Activated T-helper 1 cell treated with anti-CD3 and anti-CD28 coated beads, Interleukin-12 subunit alpha, Interleukin-12 subunit beta, Interleukin-2, Interleukin-4 antibody, amounts not matched to agents 30 ng/mL and 10 ng/mL and 1 ng/mL, durations not matched to agents 14 hours and 24 hours and 36 hours (primary cell): ENCODE measurements at regions of chr12 and their contacts with region 1.

Region 1: DNA sequence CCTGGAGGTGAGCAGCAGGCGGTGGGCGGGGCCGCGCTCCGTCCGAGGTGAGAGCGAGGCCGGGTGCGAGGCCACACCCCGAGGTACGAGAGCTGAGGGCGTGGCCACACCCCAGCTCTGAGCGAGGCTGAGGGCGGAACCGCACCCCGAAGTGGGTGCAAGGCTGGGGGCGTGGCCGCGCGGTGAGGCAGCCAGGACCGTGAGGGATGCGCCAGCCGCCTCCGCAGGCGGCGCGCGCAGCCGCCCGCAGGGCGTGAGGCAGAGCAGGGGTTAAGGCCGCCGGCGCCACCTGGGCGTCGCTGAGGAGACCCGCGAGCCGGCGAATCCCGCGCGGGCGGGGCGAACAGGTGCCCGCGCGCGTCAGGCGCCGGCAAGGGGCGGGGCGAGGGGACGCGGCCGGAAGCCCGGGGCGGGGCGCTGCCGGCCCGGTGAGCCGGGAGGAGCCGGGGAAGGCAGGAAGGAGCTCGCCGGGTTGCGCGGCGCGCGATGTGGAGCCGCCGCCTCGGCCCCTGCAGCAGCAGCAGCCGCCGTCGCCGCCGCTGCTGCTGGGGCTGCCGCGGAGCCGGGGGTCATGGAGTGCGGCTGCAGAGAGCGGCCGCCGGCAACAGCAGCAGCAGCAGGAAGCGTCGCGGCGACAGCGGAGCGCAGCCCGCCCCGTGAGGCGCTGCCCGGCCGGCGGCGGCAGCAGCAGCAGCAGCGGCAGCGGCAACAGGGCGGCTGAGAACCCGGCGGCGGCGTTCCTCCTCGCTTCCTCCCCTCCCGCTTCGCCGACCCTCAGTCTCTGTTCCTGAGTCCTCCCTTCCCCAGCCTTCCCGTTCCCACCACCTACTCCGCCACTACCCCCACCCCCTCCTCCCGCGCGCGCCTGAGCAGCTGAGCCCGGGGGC is at the start of gene BICDL1:
- DNase-seq: peak; percentile 97
- H3K4me3 Mint-ChIP-seq: peak within 1 kb of the TSS; percentile 94
- H3K27ac Mint-ChIP-seq: peak within 1 kb of the TSS; percentile 95
- H3K4me1 Mint-ChIP-seq: peaks cover 50% of the 10 kb centered on the region
- H3K27me3 Mint-ChIP-seq: peaks cover 11% of the 10 kb centered on the region
- total RNA-seq, gene BICDL1: 136 and 140 TPM in 2 replicates

Region 2: DNA sequence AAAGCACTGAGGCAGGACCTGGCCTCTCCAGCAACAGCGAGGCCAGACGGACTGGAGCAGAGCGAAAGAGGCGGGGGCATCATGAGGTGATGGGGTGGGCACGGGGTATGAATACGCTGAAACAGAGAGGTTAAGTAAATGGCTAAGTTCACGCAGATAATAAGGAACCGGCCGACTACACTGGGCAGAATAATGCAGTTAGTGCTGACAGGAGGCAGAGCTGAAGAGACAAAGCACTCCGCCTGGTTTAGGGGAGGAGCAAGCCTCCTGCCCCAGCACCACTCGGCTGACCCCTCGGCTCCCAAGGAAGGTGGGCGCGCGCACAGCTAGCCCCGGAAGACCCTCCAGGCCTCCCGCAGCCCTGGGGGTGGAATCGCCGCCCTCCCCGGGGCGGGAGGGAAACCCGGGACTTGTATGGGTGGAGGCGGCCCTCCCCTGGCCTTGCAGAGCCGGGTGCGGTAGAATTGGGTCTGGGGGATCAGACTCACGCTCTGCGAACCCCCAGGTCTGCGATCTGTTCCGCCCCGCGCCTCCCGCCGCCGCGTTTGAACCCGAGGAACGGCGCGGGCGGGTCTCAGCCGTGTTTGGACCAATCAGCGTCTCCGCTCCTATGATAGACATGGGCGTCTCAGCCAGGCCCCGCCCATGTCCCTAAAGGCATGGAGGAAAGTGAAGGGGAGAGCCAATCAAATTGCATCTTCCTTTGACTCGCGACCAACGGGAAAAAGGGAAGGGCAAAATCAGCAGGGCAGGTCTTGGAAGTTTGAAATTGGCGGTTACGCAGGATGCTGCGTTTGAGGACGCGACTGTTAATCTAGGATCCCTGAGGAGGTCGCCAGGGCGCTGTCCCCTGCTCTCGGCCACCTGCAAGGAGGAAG is 112.0 kb before region 1 on chr12 and contains the start of gene CIT:
- intact Hi-C with region 1: loop called (anchors 1 kb)
- DNase-seq: peak; percentile 87
- H3K4me3 Mint-ChIP-seq: peak within 1 kb of the TSS; percentile 84
- H3K27ac Mint-ChIP-seq: peak within 1 kb of the TSS; percentile 67
- H3K4me1 Mint-ChIP-seq: peaks cover 25% of the 10 kb centered on the region
- H3K27me3 Mint-ChIP-seq: peaks cover 12% of the 10 kb centered on the region
- total RNA-seq, gene CIT: 36.6 and 40.3 TPM in 2 replicates

Region 3: GRCh38 chr12:119938049-119938667 is 50.9 kb before region 1 on chr12:
- intact Hi-C with region 1: loop called (anchors 1 kb)
- DNase-seq: peak; percentile 41
- H3K4me3 Mint-ChIP-seq: no peak overlapping the region
- H3K27ac Mint-ChIP-seq: no peak overlapping the region
- H3K4me1 Mint-ChIP-seq: no peaks in the 10 kb centered on the region
- H3K27me3 Mint-ChIP-seq: peaks cover 3% of the 10 kb centered on the region